ENCODE measurements at regions of chr16 and their contacts with region 1.

Region 1: GRCh38 chr16:48164907-48165726 is 9.3 kb upstream of the ABCC12 start:
- DNase-seq: peak; percentile 12
- H3K4me3 ChIP-seq: no peak overlapping the region
- H3K27ac ChIP-seq: no peak overlapping the region
- H3K4me1 ChIP-seq: peaks cover 0 to 12% (median 0%) of the 10 kb centered on the region in 3 donors
- H3K27me3 ChIP-seq: no peaks in the 10 kb centered on the region
- CTCF ChIP-seq: peak in 5 of 6 experiments; percentile 73 to 85 (median 80)
- POLR2A ChIP-seq: no peak

Region 2: GRCh38 chr16:46954562-46954961 is 1210.6 kb before region 1 on chr16:
- intact Hi-C with region 1: loop called (anchors 10 kb)
- DNase-seq: no peak
- H3K4me3 ChIP-seq: no peak overlapping the region
- H3K27ac ChIP-seq: no peak overlapping the region
- H3K4me1 ChIP-seq: peaks cover 0 to 5% (median 0%) of the 10 kb centered on the region in 3 donors
- H3K27me3 ChIP-seq: no peaks in the 10 kb centered on the region
- CTCF ChIP-seq: no peak
- POLR2A ChIP-seq: no peak

Region 3: GRCh38 chr16:47141773-47142485 is 1023.2 kb before region 1 on chr16:
- intact Hi-C with region 1: loop called (anchors 5 kb)
- DNase-seq: peak; percentile 25
- H3K4me3 ChIP-seq: peak overlapping the region; percentile 55 to 71 (median 58)
- H3K27ac ChIP-seq: no peak overlapping the region
- H3K4me1 ChIP-seq: peaks cover 8 to 48% (median 21%) of the 10 kb centered on the region in 3 donors
- H3K27me3 ChIP-seq: peaks cover 0 to 48% (median 0%) of the 10 kb centered on the region in 4 donors
- CTCF ChIP-seq: peak; percentile 55 to 89 (median 81)
- POLR2A ChIP-seq: peak in 1 of 4 donors; percentile 33

Region 4: GRCh38 chr16:47431960-47432359 is 733.2 kb before region 1 on chr16:
- intact Hi-C with region 1: no loop called
- DNase-seq: no peak
- H3K4me3 ChIP-seq: no peak overlapping the region
- H3K27ac ChIP-seq: no peak overlapping the region
- H3K4me1 ChIP-seq: no peaks in the 10 kb centered on the region
- H3K27me3 ChIP-seq: no peaks in the 10 kb centered on the region
- CTCF ChIP-seq: no peak
- POLR2A ChIP-seq: no peak

Region 5: DNA sequence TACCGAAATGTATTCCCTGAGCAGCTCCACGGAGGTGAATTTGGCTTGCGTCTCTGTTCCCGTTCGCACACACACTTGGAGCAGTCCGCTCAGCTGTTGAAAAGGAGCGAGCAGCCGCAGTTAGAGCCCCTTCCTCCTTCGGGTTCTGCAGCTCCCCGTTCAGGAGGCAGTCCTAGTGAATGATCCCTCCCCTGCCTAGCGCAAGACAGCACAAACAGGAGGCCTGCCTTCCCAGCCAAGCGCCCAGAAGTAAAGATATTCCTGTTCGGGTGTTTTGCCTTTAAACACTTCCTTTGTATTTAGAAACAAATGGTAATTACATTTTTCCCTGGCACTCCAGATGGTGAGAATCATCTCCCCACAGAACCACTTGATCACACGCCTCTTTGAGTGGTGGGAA is 74.0 kb before region 1 on chr16:
- intact Hi-C with region 1: no loop called
- DNase-seq: no peak
- H3K4me3 ChIP-seq: no peak overlapping the region
- H3K27ac ChIP-seq: no peak overlapping the region
- H3K4me1 ChIP-seq: no peaks in the 10 kb centered on the region
- H3K27me3 ChIP-seq: peaks cover 0 to 12% (median 0%) of the 10 kb centered on the region in 4 donors
- CTCF ChIP-seq: no peak
- POLR2A ChIP-seq: no peak

Region 6: DNA sequence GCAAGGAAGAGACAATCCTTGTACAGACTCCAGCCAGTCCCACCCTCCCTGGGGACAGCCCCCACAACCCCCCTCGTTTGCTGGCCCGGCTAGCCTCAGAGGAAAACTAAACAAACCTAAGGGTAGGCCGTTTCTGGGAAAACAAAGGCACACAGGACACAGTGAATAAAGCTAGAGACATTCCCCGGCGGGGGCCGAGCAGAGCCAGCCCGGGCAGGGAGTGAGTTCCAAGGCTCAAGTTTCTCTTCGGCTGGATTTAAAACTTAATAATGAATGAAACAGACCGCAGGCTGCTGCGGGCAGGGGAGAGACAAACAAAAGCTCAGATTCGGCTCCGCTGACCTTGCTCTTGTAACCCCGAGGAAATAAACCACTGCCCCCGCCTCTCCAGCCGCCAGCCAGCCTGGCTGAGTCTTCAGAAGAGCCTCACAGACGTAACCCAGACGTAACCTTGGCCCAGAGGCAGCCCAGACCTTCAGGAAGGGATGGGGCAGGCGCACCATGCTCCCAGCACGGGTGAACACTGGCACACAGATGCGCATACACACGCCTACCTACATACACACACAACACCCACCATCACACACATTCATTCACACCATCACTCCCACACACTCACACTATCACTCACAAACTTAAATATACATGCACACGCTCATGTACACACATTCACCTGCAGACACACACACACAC is 1474.8 kb after region 1 on chr16:
- intact Hi-C with region 1: no loop called
- DNase-seq: no peak
- H3K4me3 ChIP-seq: no peak overlapping the region
- H3K27ac ChIP-seq: peak overlapping the region in 2 of 4 donors; percentile 63 to 71
- H3K4me1 ChIP-seq: peaks cover 0 to 40% (median 4%) of the 10 kb centered on the region in 3 donors
- H3K27me3 ChIP-seq: peaks cover 0 to 12% (median 0%) of the 10 kb centered on the region in 4 donors
- CTCF ChIP-seq: no peak
- POLR2A ChIP-seq: no peak

Measured in esophagus squamous epithelium (tissue), 5 donors.